Gastrocnemius medialis (tissue), 4 donors: ENCODE measurements at regions of chr16 and their contacts with region 1.

Region 1: DNA sequence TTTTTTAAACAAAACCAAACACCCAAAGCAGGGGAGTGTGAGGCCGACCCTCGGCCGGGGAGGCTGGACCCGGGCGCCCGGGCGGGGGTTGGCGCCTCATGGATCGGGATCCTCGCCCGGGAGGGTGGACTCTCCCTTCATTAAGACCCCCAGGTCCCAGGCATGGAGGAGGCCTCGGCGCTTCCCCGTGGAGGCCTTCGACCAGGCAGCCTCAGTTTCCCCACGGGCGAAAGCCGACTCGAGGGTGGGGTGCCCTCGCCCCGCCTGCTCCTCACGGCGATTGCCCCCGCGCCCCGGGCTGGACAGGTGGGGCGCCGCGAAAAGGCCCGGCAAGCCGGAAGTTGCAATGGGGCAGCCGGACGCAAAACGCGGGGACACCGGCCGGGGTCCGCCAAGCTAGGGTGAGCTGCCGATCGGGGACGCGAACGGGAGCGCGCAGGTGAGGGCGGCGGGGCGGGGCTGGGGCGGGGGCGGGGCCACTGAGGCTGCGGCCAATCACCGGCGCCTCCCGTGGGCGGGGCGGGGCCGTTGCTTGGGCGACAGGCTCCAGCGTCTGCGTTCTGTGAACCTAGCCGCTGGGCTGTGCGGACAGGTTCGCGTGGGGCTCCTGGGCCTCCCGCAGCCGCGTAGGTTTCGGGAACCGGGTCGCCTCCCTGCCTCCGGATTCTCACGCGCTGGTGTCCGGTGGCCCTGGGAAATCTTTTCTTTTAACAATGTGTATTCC is 6.0 kb upstream of the ZNF205 start:
- DNase-seq: peak; percentile 83
- ATAC-seq: peak; percentile 91 to 96
- H3K4me3 ChIP-seq: peak overlapping the region; percentile 68 to 78 (median 75)
- H3K27ac ChIP-seq: peak overlapping the region; percentile 71 to 89 (median 82)
- H3K4me1 ChIP-seq: peaks cover 11 to 12% of the 10 kb centered on the region in 2 donors
- H3K27me3 ChIP-seq: no peaks in the 10 kb centered on the region
- CTCF ChIP-seq: no peak
- POLR2A ChIP-seq: peak in 1 of 2 donors; percentile 28

Region 2: GRCh38 chr16:3059000-3059722 is 47.2 kb before region 1 on chr16:
- in situ Hi-C with region 1: no loop called
- intact Hi-C with region 1: loop called (anchors 1 kb)
- DNase-seq: peak; percentile 67 to 82
- ATAC-seq: peak; percentile 83 to 89
- H3K4me3 ChIP-seq: peak overlapping the region; percentile 79 to 98 (median 92)
- H3K27ac ChIP-seq: peak overlapping the region; percentile 79 to 85 (median 83)
- H3K4me1 ChIP-seq: peaks cover 28 to 39% of the 10 kb centered on the region in 2 donors
- H3K27me3 ChIP-seq: no peaks in the 10 kb centered on the region
- CTCF ChIP-seq: peak; percentile 81 to 99 (median 99)
- POLR2A ChIP-seq: peak in 1 of 2 donors; percentile 17

Region 3: GRCh38 chr16:3123986-3124886 is 17.9 kb after region 1 on chr16:
- in situ Hi-C with region 1: no loop called
- intact Hi-C with region 1: loop called (anchors 2 kb)
- DNase-seq: peak; percentile 91 to 93
- ATAC-seq: peak; percentile 96 to 97
- H3K4me3 ChIP-seq: peak overlapping the region; percentile 64 to 89 (median 70)
- H3K27ac ChIP-seq: peak overlapping the region; percentile 45 to 78 (median 58)
- H3K4me1 ChIP-seq: peaks cover 27 to 44% of the 10 kb centered on the region in 2 donors
- H3K27me3 ChIP-seq: no peaks in the 10 kb centered on the region
- CTCF ChIP-seq: no peak
- POLR2A ChIP-seq: peak in 1 of 2 donors; percentile 6

Region 4: GRCh38 chr16:3134564-3135417 is 28.4 kb after region 1 on chr16 and contains the start of gene ZNF213:
- in situ Hi-C with region 1: no loop called
- intact Hi-C with region 1: loop called (anchors 1 kb)
- DNase-seq: peak; percentile 96 to 97
- ATAC-seq: peak; percentile 99 to 100
- H3K4me3 ChIP-seq: peak within 1 kb of the TSS; percentile 76 to 99 (median 88)
- H3K27ac ChIP-seq: peak within 1 kb of the TSS; percentile 87 to 96 (median 93)
- H3K4me1 ChIP-seq: peaks cover 25 to 47% of the 10 kb centered on the region in 2 donors
- H3K27me3 ChIP-seq: no peaks in the 10 kb centered on the region
- CTCF ChIP-seq: no peak
- POLR2A ChIP-seq: peak; percentile 87 to 93
- total RNA-seq, gene ZNF213: 8.9 to 18.6 (median 14.5) TPM

Region 5: DNA sequence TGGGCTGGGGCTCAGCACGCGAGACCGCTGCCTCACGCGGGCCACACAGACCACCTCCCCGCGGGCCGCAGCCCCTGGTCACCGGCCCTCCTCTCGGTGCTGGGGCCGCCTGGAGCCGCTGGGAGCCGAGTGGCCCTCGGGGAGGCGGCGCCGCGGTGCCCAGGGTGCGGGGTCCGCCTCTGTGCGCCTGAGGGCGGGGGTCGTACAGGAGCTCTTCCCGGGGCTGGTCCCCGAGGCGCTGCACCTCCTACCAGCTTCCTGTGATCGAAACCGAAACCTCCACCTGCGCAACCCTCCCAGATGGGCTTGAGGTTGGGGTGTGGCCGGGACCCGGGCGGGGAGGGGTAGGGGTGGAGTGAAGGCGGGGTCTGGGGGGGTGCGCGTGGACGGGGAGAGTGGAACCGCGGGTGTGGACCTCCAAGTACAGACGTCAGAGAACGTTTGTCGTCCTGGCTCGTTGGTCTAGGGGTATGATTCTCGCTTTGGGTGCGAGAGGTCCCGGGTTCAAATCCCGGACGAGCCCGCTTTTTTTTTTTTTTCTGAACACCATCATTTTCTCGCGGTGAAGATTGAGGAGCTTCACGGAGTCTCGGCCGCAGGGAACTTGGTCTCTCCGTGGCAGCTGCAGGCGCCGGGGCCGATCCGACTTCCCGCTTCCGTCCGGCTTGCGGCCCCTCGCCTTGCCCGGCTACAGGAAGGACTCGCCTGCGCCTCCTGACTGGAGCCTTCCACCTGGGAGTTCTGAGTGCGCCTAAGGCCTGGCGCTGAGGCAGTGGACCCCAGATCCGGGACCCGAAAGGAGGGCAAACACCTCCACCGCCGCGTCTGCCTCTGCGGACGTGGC is 52.3 kb after region 1 on chr16:
- in situ Hi-C with region 1: no loop called
- intact Hi-C with region 1: no loop called
- DNase-seq: peak in 1 of 2 donors; percentile 62
- ATAC-seq: peak; percentile 70 to 75
- H3K4me3 ChIP-seq: peak overlapping the region; percentile 60 to 92 (median 70)
- H3K27ac ChIP-seq: peak overlapping the region; percentile 74 to 80 (median 75)
- H3K4me1 ChIP-seq: peaks cover 3 to 15% of the 10 kb centered on the region in 2 donors
- H3K27me3 ChIP-seq: peaks cover 57 to 63% (median 62%) of the 10 kb centered on the region in 3 donors
- CTCF ChIP-seq: no peak
- POLR2A ChIP-seq: peak in 1 of 2 donors; percentile 32